PC-9 (cell line): ENCODE measurements at regions of chr2 and their contacts with region 1.

Region 1: GRCh38 chr2:182404092-182404491 is 22.7 kb downstream of the PDE1A start:
- DNase-seq: no peak
- H3K4me3 ChIP-seq: no peak overlapping the region
- H3K27ac ChIP-seq: no peak overlapping the region
- H3K4me1 ChIP-seq: no peaks in the 10 kb centered on the region
- H3K27me3 ChIP-seq: no peaks in the 10 kb centered on the region
- CTCF ChIP-seq: no peak

Region 2: GRCh38 chr2:182426082-182426917 is 22.2 kb after region 1 on chr2:
- CTCF ChIA-PET with region 1: interaction called, 14 read pairs
- POLR2A ChIA-PET with region 1: no interaction called
- intact Hi-C with region 1: no loop called
- DNase-seq: no peak
- H3K4me3 ChIP-seq: no peak overlapping the region
- H3K27ac ChIP-seq: no peak overlapping the region
- H3K4me1 ChIP-seq: no peaks in the 10 kb centered on the region
- H3K27me3 ChIP-seq: no peaks in the 10 kb centered on the region
- CTCF ChIP-seq: no peak